PC-9 (cell line): ENCODE measurements at regions of chr15 and their contacts with region 1.

Region 1: GRCh38 chr15:52078876-52079700 is 33.5 kb downstream of the BCL2L10 start:
- DNase-seq: peak in 1 of 2 experiments; percentile 60
- H3K4me3 ChIP-seq: no peak overlapping the region
- H3K27ac ChIP-seq: no peak overlapping the region
- H3K4me1 ChIP-seq: peaks cover 9% of the 10 kb centered on the region; the same call in 1 of the 2 replicates
- H3K27me3 ChIP-seq: no peaks in the 10 kb centered on the region
- CTCF ChIP-seq: peak; percentile 78

Region 2: GRCh38 chr15:51992976-51993375 is 86.1 kb before region 1 on chr15:
- CTCF ChIA-PET with region 1: no interaction called
- POLR2A ChIA-PET with region 1: no interaction called
- intact Hi-C with region 1: no loop called
- DNase-seq: peak in 1 of 2 experiments; percentile 78
- H3K4me3 ChIP-seq: no peak overlapping the region
- H3K27ac ChIP-seq: peak overlapping the region; percentile 39; the same call in 1 of the 2 replicates
- H3K4me1 ChIP-seq: peaks cover 28% of the 10 kb centered on the region
- H3K27me3 ChIP-seq: no peaks in the 10 kb centered on the region
- CTCF ChIP-seq: no peak

Region 3: DNA sequence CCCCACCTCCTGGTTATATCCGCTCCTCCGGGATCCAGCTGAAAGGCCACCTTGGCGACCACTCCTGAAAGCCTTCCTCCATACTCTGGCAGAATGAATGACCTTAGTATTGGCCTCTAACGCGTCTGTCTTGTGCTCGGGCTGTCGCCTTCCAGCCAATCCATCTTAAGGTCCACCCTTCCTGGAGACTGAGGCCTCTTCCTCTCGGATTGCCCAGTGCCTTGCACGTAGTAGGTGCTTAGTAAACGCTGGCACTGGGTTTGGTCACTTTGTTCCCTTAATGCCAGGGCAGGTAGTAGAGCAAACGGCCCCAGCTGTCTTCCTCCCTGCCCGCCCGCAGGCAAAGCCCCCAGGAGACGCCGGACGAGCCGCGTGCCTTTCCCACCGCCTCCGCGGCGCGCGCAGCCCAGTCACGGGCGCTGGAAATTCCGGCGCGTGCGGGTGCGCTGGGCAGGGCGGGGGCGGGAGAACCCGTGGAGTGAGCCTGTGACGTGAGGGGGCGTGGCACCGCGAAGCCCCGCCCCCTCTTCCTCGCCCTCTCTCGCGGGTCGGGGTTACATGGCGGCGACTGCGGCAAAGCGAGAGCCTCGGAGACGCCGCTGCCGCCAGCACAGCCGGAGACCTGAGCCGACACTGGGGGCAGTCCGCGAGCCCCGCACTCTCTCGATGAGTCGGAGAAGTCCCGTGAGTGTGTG is 60.2 kb before region 1 on chr15 and contains the start of gene MAPK6:
- CTCF ChIA-PET with region 1: no interaction called
- POLR2A ChIA-PET with region 1: no interaction called
- intact Hi-C with region 1: loop called (anchors 10 kb)
- DNase-seq: peak; percentile 67 to 90
- H3K4me3 ChIP-seq: peak within 1 kb of the TSS; percentile 99
- H3K27ac ChIP-seq: peak within 1 kb of the TSS; percentile 83
- H3K4me1 ChIP-seq: peaks cover 16% of the 10 kb centered on the region
- H3K27me3 ChIP-seq: no peaks in the 10 kb centered on the region
- CTCF ChIP-seq: no peak
- total RNA-seq, gene MAPK6: 27.5 and 38.7 TPM in 2 replicates